Breast epithelium (tissue), 4 donors: ENCODE measurements at regions of chr7 and their contacts with region 1.

Region 1: GRCh38 chr7:153858355-153858754 is 193.8 kb upstream of the DPP6 start:
- DNase-seq: no peak
- H3K4me3 ChIP-seq: no peak overlapping the region
- H3K27ac ChIP-seq: no peak overlapping the region
- H3K4me1 ChIP-seq: no peaks in the 10 kb centered on the region
- H3K27me3 ChIP-seq: no peaks in the 10 kb centered on the region
- CTCF ChIP-seq: no peak
- POLR2A ChIP-seq: no peak

Region 2: GRCh38 chr7:153835104-153835503 is 23.3 kb before region 1 on chr7:
- intact Hi-C with region 1: no loop called
- DNase-seq: no peak
- H3K4me3 ChIP-seq: no peak overlapping the region
- H3K27ac ChIP-seq: no peak overlapping the region
- H3K4me1 ChIP-seq: no peaks in the 10 kb centered on the region
- H3K27me3 ChIP-seq: no peaks in the 10 kb centered on the region
- CTCF ChIP-seq: no peak
- POLR2A ChIP-seq: no peak

Region 3: GRCh38 chr7:153891990-153892389 is 33.6 kb after region 1 on chr7:
- intact Hi-C with region 1: no loop called
- DNase-seq: no peak
- H3K4me3 ChIP-seq: no peak overlapping the region
- H3K27ac ChIP-seq: no peak overlapping the region
- H3K4me1 ChIP-seq: no peaks in the 10 kb centered on the region
- H3K27me3 ChIP-seq: peaks cover 0 to 22% of the 10 kb centered on the region in 2 donors
- CTCF ChIP-seq: no peak
- POLR2A ChIP-seq: no peak

Region 4: DNA sequence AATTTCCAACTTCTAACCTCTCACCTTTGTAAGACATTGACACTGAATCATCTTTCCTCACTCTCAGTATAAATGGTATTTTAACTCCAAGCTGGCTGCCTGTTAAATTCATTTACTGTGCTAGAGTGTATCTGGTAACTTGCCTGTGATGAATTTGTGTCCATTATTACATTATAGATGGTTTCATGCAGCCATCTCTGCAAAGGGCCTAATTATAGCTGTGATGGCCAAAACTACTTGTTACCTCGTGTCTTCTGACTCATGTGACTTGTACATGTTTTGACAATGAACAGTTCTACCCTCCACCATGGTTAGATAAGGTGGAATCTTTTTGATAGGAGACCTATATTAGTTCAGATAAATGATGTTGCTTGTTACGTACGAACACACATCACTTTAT is 752.5 kb after region 1 on chr7:
- intact Hi-C with region 1: loop called (anchors 10 kb)
- DNase-seq: no peak
- H3K4me3 ChIP-seq: no peak overlapping the region
- H3K27ac ChIP-seq: no peak overlapping the region
- H3K4me1 ChIP-seq: no peaks in the 10 kb centered on the region
- H3K27me3 ChIP-seq: no peaks in the 10 kb centered on the region
- CTCF ChIP-seq: no peak
- POLR2A ChIP-seq: no peak